Activated CD8-positive, alpha-beta T cell treated with anti-CD3 and anti-CD28 coated beads, Interleukin-2, amount 10 ng/mL, durations not matched to agents 7 days and 5 days (primary cell): ENCODE measurements at regions of chr12 and their contacts with region 1.

Region 1: GRCh38 chr12:108664338-108665258 is 30.9 kb upstream of the SELPLG start:
- DNase-seq: peak; percentile 90
- ATAC-seq: peak; percentile 98
- H3K4me3 Mint-ChIP-seq: no peak overlapping the region
- H3K27ac Mint-ChIP-seq: peak overlapping the region; percentile 76
- H3K4me1 Mint-ChIP-seq: peaks cover 20% of the 10 kb centered on the region
- H3K27me3 Mint-ChIP-seq: no peaks in the 10 kb centered on the region

Region 2: DNA sequence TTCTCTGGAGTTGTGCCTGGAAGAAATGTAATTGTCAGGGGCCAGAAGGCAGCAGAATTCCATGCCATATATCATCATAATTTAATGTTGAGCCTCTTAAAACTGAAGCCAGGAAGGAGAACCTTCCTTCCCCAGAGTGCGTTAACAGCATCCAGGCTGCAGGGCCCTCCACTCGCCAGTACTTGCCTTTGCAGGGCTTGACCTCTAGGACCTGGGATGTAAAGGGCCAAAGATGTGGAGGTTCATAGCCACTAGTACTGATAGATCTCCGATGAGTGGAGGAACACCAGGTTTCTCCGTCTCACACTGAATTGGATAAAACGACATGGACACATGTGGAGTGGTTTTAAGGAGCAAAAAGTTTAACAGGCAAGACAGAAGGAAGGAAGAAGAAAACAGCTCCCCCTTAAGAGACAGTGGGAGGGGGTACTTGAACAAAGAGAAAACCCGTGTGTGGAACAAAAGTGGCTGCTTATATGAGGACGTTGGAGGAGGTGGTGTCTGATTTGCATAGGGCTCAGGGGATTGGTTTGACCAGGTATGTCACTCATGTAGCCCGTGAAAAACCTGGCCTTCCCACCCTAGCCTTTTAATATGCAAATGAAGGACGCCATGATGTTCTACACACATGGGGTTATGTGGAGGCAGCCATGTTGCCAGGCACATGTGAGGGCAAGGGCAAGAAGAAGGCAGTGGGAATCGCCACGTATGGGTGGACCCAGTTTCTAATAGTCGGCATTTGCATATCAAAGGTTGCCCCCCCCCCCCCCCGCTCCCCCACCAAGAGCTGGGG is 574.3 kb before region 1 on chr12:
- CTCF ChIA-PET with region 1: no interaction called
- POLR2A ChIA-PET with region 1: no interaction called
- DNase-seq: no peak
- ATAC-seq: no peak
- H3K4me3 Mint-ChIP-seq: no peak overlapping the region
- H3K27ac Mint-ChIP-seq: no peak overlapping the region
- H3K4me1 Mint-ChIP-seq: no peaks in the 10 kb centered on the region
- H3K27me3 Mint-ChIP-seq: peaks cover 13% of the 10 kb centered on the region

Region 3: DNA sequence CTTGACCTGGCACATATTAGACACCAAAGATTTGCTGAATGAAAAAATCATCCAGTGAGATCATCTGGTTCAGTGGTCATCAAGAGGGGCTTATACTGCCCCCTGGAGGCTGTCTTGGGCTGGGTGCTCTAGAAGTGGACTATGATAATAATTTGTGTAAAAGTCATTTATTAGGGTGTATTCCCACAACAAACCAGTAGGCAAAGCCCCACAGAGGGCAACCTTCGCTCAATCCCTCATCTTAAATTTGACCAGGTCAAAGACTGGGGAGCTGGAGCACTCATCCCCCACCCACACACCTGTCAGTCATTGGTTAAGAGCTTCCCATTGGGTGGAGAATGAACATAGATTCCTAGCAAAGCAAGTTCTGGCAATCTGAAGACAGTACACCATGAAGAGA is 169.5 kb before region 1 on chr12:
- CTCF ChIA-PET with region 1: no interaction called
- POLR2A ChIA-PET with region 1: no interaction called
- DNase-seq: peak; percentile 53
- ATAC-seq: no peak
- H3K4me3 Mint-ChIP-seq: no peak overlapping the region
- H3K27ac Mint-ChIP-seq: no peak overlapping the region
- H3K4me1 Mint-ChIP-seq: no peaks in the 10 kb centered on the region
- H3K27me3 Mint-ChIP-seq: peaks cover 24% of the 10 kb centered on the region

Region 4: GRCh38 chr12:108514973-108515814 is 149.4 kb before region 1 on chr12 and contains the start of gene FICD:
- CTCF ChIA-PET with region 1: no interaction called
- POLR2A ChIA-PET with region 1: no interaction called
- DNase-seq: peak; percentile 100
- ATAC-seq: peak; percentile 95
- H3K4me3 Mint-ChIP-seq: peak within 1 kb of the TSS; percentile 86
- H3K27ac Mint-ChIP-seq: peak within 1 kb of the TSS; percentile 91
- H3K4me1 Mint-ChIP-seq: peaks cover 27% of the 10 kb centered on the region
- H3K27me3 Mint-ChIP-seq: no peaks in the 10 kb centered on the region
- total RNA-seq, gene FICD: 4.6 to 5.2 TPM

Region 5: GRCh38 chr12:108562348-108563135 is 102.1 kb before region 1 on chr12 and contains the start of gene ISCU:
- CTCF ChIA-PET with region 1: interaction called, 104 read pairs
- POLR2A ChIA-PET with region 1: interaction called, 9 read pairs
- DNase-seq: peak; percentile 98
- ATAC-seq: peak; percentile 78
- H3K4me3 Mint-ChIP-seq: peak within 1 kb of the TSS; percentile 100
- H3K27ac Mint-ChIP-seq: peak within 1 kb of the TSS; percentile 100
- H3K4me1 Mint-ChIP-seq: peaks cover 67% of the 10 kb centered on the region
- H3K27me3 Mint-ChIP-seq: no peaks in the 10 kb centered on the region
- total RNA-seq, gene ISCU: 58.5 to 59.5 TPM

Region 6: DNA sequence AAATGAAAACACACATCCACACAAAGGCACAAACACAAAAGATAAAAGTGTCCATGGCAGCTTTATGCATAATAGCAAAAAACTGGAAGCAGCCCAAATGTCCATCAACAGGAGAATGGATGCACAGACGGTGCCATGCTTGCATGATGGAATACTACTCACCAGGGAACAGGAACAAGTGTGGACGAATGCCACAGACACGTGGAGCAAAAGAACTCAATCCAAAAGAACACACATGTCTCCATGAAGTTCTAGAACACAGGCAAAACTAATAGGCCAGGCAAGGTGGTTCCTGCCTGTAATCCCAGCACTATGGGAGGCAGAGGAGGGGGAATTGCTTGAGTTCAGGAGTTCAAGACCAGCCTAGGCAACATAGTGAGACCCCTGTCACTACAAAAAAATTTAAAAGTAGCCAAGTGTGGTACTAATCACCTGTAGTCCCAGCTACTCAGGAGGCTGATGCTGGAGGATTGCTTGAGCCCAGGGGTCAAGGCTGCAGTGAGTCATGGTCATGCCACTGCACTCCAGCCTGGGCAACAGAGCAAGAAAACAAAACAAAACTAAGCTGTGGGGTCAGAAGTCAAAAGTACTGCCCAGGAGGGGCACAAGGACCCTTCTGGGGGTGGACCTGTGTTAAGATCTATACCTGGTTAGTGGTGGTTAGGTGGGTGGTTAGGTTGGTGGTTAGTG is 59.5 kb before region 1 on chr12:
- CTCF ChIA-PET with region 1: no interaction called
- POLR2A ChIA-PET with region 1: no interaction called
- DNase-seq: no peak
- ATAC-seq: peak; percentile 29
- H3K4me3 Mint-ChIP-seq: peak overlapping the region; percentile 54
- H3K27ac Mint-ChIP-seq: peak overlapping the region; percentile 83
- H3K4me1 Mint-ChIP-seq: no peaks in the 10 kb centered on the region
- H3K27me3 Mint-ChIP-seq: peaks cover 9% of the 10 kb centered on the region

Region 7: DNA sequence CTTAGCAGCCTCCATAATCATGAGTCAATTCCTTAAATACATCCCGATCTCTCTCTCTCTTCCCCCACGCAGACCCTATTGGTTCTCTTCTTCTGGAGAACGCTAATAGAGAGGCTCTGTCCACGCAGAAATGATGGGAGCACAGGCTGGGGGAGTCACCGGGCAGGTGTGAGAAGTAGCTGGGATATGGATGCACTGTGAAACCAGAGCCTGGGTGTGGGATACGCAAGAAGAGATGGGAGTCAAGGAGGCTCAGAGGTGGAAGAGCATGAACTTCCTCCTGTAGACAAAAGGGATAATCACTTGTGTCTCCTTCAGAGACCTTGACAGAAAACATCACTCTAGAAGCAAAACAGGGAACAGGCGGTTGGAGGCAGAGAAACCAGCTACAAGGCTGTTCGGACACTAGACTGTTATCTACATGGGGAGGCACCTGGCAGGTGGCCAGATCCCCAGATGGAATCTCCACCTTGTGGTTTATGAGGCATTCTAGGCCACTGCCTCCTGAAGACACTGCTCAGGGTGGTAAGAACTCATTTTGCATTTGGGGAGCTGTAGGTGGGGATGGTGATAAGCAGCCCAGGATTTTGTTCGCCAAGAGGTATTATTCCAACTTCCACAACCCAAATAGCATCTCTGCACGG is 23.7 kb before region 1 on chr12:
- CTCF ChIA-PET with region 1: interaction called, 32 read pairs
- POLR2A ChIA-PET with region 1: interaction called, 6 read pairs
- DNase-seq: no peak
- ATAC-seq: no peak
- H3K4me3 Mint-ChIP-seq: no peak overlapping the region
- H3K27ac Mint-ChIP-seq: no peak overlapping the region
- H3K4me1 Mint-ChIP-seq: peaks cover 45% of the 10 kb centered on the region
- H3K27me3 Mint-ChIP-seq: no peaks in the 10 kb centered on the region

Region 8: DNA sequence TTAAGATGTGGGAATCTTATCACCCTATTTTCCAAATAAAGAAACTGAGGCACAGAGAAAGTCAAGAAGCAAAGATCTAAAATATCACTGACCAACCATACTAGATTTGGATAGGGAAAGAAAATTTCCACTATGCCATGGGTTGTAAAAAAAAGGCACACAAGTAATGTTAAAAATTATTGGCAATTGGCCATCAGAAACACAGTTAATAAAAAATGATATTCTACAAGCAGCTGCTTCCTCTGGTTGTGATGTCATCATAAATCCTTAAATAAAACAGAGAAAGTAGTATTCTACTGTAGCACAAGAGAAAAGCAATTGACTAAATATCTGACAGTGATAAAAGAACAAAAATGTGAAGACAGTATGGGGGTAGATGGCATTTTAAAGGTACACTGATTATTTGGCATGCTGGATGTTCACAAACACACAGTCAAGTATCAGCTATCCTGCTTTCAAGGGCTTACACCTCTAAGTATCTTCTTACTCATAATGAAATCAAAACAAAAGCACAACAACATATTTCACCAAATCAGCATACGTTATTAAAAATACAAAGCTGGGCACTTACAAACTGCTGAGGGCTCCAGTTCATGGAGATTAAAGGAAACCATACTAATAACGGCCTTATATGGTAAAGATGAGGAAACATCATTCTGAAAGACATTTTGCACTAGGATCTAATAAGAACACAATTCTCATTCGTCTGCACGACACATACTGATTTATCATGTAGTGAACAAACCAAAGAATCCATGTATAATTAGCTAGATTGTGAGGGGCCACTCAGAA is 21.1 kb after region 1 on chr12:
- CTCF ChIA-PET with region 1: interaction called, 42 read pairs
- POLR2A ChIA-PET with region 1: no interaction called
- DNase-seq: no peak
- ATAC-seq: no peak
- H3K4me3 Mint-ChIP-seq: no peak overlapping the region
- H3K27ac Mint-ChIP-seq: no peak overlapping the region
- H3K4me1 Mint-ChIP-seq: peaks cover 33% of the 10 kb centered on the region
- H3K27me3 Mint-ChIP-seq: no peaks in the 10 kb centered on the region

Region 9: GRCh38 chr12:108731866-108732461 is 67.4 kb after region 1 on chr12:
- CTCF ChIA-PET with region 1: interaction called, 16 read pairs
- POLR2A ChIA-PET with region 1: interaction called, 3 read pairs
- DNase-seq: peak; percentile 98
- ATAC-seq: peak; percentile 74
- H3K4me3 Mint-ChIP-seq: peak overlapping the region; percentile 92
- H3K27ac Mint-ChIP-seq: peak overlapping the region; percentile 93
- H3K4me1 Mint-ChIP-seq: peaks cover 50% of the 10 kb centered on the region
- H3K27me3 Mint-ChIP-seq: peaks cover 4% of the 10 kb centered on the region

Region 10: DNA sequence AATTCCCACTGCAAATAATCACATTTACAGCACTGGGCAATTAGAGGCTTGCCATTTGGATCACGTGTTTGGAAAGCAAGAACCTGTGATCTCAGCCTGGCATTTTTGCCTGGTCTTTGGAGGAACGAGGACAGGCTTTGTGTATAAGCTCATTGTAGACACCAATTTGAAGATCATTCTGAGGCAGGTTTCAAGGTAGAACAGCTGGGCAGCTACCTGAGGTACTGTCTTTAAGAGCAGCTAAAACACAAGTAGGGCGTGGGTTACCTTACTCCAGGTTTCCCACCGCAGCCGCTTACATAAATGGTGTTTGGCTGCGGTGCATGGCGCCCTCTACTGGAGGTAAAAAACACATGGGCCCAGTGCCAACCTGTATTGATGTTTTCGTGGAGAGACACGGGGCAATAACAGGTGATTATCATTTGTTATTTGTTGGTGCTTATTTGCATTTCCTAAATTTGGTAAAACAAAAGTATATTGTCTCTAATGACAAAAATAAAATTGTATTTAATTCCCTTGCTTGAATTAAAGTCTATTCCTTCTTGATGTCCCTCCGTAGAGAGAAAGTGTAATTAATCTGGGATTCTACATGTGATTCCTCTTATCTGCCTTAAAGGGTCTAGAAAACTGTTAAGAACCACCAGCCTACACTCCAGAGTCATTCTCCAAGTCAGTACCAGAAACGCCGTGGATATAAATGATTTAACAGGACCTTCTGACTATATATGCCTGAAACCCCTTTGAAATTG is 286.6 kb after region 1 on chr12:
- CTCF ChIA-PET with region 1: interaction called, 39 read pairs
- POLR2A ChIA-PET with region 1: no interaction called
- DNase-seq: peak; percentile 81
- ATAC-seq: peak; percentile 92
- H3K4me3 Mint-ChIP-seq: no peak overlapping the region
- H3K27ac Mint-ChIP-seq: no peak overlapping the region
- H3K4me1 Mint-ChIP-seq: peaks cover 7% of the 10 kb centered on the region
- H3K27me3 Mint-ChIP-seq: peaks cover 23% of the 10 kb centered on the region